HCT116 (cell line): ENCODE measurements at regions of chr9 and their contacts with region 1.

Region 1: GRCh38 chr9:122912964-122913673 is at the start of gene ZBTB6:
- DNase-seq: peak; percentile 79
- ATAC-seq: peak; percentile 92
- H3K4me3 ChIP-seq: peak within 1 kb of the TSS; percentile 61 to 95
- H3K27ac ChIP-seq: peak within 1 kb of the TSS; percentile 73
- H3K4me1 ChIP-seq: peaks cover 7 to 13% of the 10 kb centered on the region in 2 experiments; a peak in 3 of 4 replicates
- H3K27me3 ChIP-seq: no peaks in the 10 kb centered on the region
- CTCF ChIP-seq: no peak
- POLR2A ChIP-seq: no peak
- RAD21 ChIP-seq: no peak
- total RNA-seq, gene ZBTB6: 12.3 TPM

Region 2: DNA sequence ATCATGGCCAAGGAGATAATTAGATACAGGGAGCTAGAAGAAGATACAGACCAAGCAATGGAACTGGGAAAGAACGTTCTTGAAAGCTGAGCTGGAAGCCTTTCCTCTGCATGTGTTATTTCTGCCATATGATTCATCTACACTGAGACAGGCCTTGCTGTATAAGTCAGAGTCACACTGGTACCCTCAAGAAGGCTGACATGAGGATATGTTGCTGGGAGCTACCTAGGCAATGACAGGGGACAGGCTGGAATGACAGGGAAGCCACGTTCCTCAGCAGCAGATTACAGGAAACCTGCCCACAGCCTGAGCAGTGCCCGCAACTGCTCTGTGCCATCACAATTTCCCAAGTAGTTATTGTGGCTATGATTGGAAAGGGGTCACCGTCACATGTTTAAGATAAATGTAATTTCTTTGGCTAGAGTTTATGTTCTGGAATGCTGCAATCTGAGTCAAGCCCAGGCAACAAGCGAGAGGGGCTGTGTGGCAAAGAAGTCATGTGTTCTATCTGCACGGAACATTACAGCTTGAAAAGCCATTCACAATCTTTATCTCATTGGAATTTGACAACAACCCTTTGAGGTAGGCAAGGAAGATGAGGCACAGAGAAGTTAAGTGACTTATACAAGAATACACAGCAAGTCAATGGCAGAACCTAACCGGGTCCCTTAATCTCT is 928.3 kb before region 1 on chr9:
- CTCF ChIA-PET with region 1: no interaction called
- POLR2A ChIA-PET with region 1: no interaction called
- RAD21 ChIA-PET with region 1: no interaction called
- intact Hi-C with region 1: no loop called
- DNase-seq: no peak
- ATAC-seq: no peak
- H3K4me3 ChIP-seq: no peak overlapping the region
- H3K27ac ChIP-seq: no peak overlapping the region
- H3K4me1 ChIP-seq: no peaks in the 10 kb centered on the region
- H3K27me3 ChIP-seq: no peaks in the 10 kb centered on the region
- CTCF ChIP-seq: no peak
- POLR2A ChIP-seq: no peak
- RAD21 ChIP-seq: no peak

Region 3: DNA sequence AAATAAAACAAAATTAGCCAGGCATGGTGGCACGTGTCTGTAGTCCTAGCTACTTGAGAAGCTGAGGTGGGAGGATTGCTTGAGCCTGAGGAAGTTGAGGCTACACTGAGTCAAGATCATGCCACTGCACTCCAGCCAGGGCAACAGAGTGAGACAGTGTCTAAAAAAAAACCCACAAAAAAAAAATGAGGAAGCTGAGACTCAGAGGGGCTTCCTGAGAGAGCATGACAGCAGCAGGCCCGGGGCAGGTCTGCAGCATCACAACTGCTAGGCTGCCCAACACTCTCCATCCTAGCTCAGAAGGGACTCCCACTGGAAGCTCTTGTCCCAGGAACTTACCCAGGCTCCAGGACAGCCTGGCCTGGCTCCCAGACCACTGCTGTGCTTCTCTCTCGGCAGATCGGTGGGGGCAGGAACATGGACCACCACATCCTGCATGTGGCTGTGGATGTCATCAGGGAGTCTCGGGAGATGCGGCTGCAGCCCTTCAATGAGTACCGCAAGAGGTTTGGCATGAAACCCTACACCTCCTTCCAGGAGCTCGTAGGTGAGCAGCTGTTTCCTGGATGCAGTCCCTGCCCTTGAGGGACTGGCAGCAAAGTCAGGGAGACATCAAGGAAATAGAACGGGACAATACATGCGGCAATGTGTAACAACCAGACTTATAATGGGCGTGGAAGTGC is 523.2 kb before region 1 on chr9:
- CTCF ChIA-PET with region 1: no interaction called
- POLR2A ChIA-PET with region 1: no interaction called
- RAD21 ChIA-PET with region 1: no interaction called
- intact Hi-C with region 1: no loop called
- DNase-seq: no peak
- ATAC-seq: no peak
- H3K4me3 ChIP-seq: no peak overlapping the region
- H3K27ac ChIP-seq: no peak overlapping the region
- H3K4me1 ChIP-seq: peaks cover 0 to 4% of the 10 kb centered on the region in 2 experiments; a peak in 1 of 4 replicates
- H3K27me3 ChIP-seq: no peaks in the 10 kb centered on the region
- CTCF ChIP-seq: no peak
- POLR2A ChIP-seq: no peak
- RAD21 ChIP-seq: no peak

Region 4: GRCh38 chr9:122931226-122932121 is 18.4 kb after region 1 on chr9 and contains the start of gene ZBTB26:
- CTCF ChIA-PET with region 1: interaction called, 5 read pairs
- POLR2A ChIA-PET with region 1: interaction called, 19 read pairs
- RAD21 ChIA-PET with region 1: interaction called in 1 of 2 experiments, 3 read pairs
- intact Hi-C with region 1: loop called (anchors 1 kb)
- DNase-seq: peak; percentile 90
- ATAC-seq: peak; percentile 96
- H3K4me3 ChIP-seq: peak within 1 kb of the TSS; percentile 96 to 98
- H3K27ac ChIP-seq: peak within 1 kb of the TSS; percentile 74
- H3K4me1 ChIP-seq: peaks cover 2 to 16% of the 10 kb centered on the region in 2 experiments; a peak in 3 of 4 replicates
- H3K27me3 ChIP-seq: no peaks in the 10 kb centered on the region
- CTCF ChIP-seq: no peak
- POLR2A ChIP-seq: peak; percentile 61
- RAD21 ChIP-seq: no peak
- total RNA-seq, gene ZBTB26: 5.5 TPM

Region 5: DNA sequence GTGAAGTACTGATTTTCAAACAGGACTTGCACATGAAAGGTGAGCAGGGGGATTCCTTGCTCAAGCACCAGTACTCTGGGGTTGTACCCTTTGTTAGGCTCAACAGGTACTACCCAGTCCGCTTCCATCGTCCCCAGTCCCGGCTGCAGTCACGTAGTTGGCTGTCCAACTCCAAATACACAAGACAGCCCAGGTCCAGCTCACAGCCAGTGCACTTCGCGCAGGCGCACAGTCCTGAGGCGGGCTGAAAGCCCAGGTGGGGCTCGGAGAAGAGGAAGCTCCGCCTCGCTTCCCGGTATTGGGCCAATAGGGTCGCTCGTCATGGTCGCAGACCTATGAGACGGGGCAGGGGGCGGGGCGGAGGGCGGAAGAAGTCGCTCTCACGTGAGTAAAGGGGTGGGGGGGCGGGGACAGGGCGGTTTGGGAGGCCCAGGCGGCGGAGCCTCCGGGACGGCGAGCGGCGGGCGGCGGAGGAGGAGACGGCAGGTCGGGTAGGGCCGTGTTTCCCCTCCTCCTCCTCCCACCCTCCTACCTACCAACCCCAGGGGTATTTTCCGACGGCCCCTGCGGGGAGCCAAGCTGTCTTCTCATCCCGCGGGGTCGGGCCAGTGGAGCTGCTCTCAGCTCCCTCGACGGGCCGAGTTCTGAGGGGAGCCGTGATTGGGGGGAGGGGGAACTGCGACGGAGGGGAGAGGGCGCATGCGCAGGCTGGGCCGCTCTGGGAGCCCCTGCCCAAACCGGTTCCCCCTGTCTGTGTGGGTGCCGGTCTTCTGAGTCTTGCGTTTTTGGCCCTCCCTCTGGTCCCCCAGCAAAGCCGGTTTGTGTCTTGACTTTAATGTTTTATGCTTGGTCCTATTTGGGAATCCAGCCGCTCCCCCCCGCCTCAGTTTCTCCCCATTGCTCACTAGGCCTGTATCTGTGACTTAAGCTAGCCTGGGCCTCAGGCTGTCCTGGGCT is 27.8 kb after region 1 on chr9 and contains the start of gene RABGAP1:
- CTCF ChIA-PET with region 1: interaction called, 4 read pairs
- POLR2A ChIA-PET with region 1: interaction called, 11 read pairs
- RAD21 ChIA-PET with region 1: no interaction called
- intact Hi-C with region 1: loop called (anchors 2 kb)
- DNase-seq: peak; percentile 96
- ATAC-seq: peak; percentile 97
- H3K4me3 ChIP-seq: peak within 1 kb of the TSS; percentile 83 to 85
- H3K27ac ChIP-seq: peak within 1 kb of the TSS; percentile 72
- H3K4me1 ChIP-seq: peaks cover 7 to 23% of the 10 kb centered on the region in 2 experiments; a peak in 3 of 4 replicates
- H3K27me3 ChIP-seq: no peaks in the 10 kb centered on the region
- CTCF ChIP-seq: no peak
- POLR2A ChIP-seq: no peak
- RAD21 ChIP-seq: no peak
- total RNA-seq, gene RABGAP1: 29.7 TPM